HCT116 (cell line): ENCODE measurements at regions of chr10 and their contacts with region 1.

Region 1: GRCh38 chr10:114470956-114471905 is 66.9 kb upstream of the AFAP1L2 start:
- DNase-seq: peak; percentile 62
- ATAC-seq: peak; percentile 96
- H3K4me3 ChIP-seq: no peak overlapping the region
- H3K27ac ChIP-seq: no peak overlapping the region
- H3K4me1 ChIP-seq: peaks cover 9 to 10% of the 10 kb centered on the region in 2 experiments; a peak in 2 of 4 replicates
- H3K27me3 ChIP-seq: no peaks in the 10 kb centered on the region
- CTCF ChIP-seq: peak; percentile 94 to 97 (median 96)
- POLR2A ChIP-seq: no peak
- RAD21 ChIP-seq: peak; percentile 94

Region 2: GRCh38 chr10:114486938-114487814 is 15.9 kb after region 1 on chr10:
- CTCF ChIA-PET with region 1: interaction called, 15 read pairs
- POLR2A ChIA-PET with region 1: no interaction called
- RAD21 ChIA-PET with region 1: no interaction called
- intact Hi-C with region 1: no loop called
- DNase-seq: no peak
- ATAC-seq: peak; percentile 18; the same call in 1 of the 2 replicates
- H3K4me3 ChIP-seq: no peak overlapping the region
- H3K27ac ChIP-seq: peak overlapping the region; percentile 70
- H3K4me1 ChIP-seq: peaks cover 49 to 58% of the 10 kb centered on the region in 2 experiments
- H3K27me3 ChIP-seq: no peaks in the 10 kb centered on the region
- CTCF ChIP-seq: peak; percentile 30 to 74 (median 43); a peak in 4 of 6 replicates
- POLR2A ChIP-seq: no peak
- RAD21 ChIP-seq: peak; percentile 36; the same call in 1 of the 2 replicates

Region 3: GRCh38 chr10:114526504-114527238 is 55.4 kb after region 1 on chr10:
- CTCF ChIA-PET with region 1: interaction called, 3 read pairs
- POLR2A ChIA-PET with region 1: no interaction called
- RAD21 ChIA-PET with region 1: no interaction called
- intact Hi-C with region 1: loop called (anchors 5 kb)
- DNase-seq: peak; percentile 95
- ATAC-seq: peak; percentile 98
- H3K4me3 ChIP-seq: peak overlapping the region; percentile 50 to 68
- H3K27ac ChIP-seq: peak overlapping the region; percentile 63
- H3K4me1 ChIP-seq: peaks cover 28 to 36% of the 10 kb centered on the region in 2 experiments; a peak in 3 of 4 replicates
- H3K27me3 ChIP-seq: no peaks in the 10 kb centered on the region
- CTCF ChIP-seq: no peak
- POLR2A ChIP-seq: peak; percentile 98
- RAD21 ChIP-seq: no peak

Region 4: GRCh38 chr10:114550756-114551635 is 79.8 kb after region 1 on chr10:
- CTCF ChIA-PET with region 1: interaction called, 96 read pairs
- POLR2A ChIA-PET with region 1: interaction called, 3 read pairs
- RAD21 ChIA-PET with region 1: interaction called, 6 to 23 read pairs
- intact Hi-C with region 1: loop called (anchors 1 kb)
- DNase-seq: peak; percentile 32
- ATAC-seq: no peak
- H3K4me3 ChIP-seq: no peak overlapping the region
- H3K27ac ChIP-seq: no peak overlapping the region
- H3K4me1 ChIP-seq: no peaks in the 10 kb centered on the region; a peak in 1 of 4 replicates
- H3K27me3 ChIP-seq: no peaks in the 10 kb centered on the region
- CTCF ChIP-seq: peak; percentile 11 to 95 (median 78); a peak in 4 of 6 replicates
- POLR2A ChIP-seq: no peak
- RAD21 ChIP-seq: peak; percentile 91

Region 5: DNA sequence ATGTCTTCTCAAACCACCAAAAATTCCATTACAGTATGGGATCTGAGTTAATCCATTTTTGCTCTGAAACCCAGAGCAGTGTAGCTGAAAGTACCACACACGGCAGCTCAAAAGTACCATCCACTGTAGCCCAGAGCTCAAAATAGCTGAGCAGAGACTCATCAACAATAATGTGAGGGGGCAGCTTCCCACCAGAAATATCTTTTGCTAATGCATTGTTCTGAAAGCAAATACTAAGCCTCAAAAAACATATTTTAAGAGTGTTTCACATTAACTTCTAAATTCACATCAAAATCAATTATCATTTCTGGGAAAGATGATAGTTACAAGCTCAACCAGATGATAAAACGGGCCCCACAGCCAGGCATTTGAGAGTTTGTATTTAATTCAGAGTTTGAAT is 113.2 kb after region 1 on chr10:
- CTCF ChIA-PET with region 1: no interaction called
- POLR2A ChIA-PET with region 1: no interaction called
- RAD21 ChIA-PET with region 1: no interaction called
- intact Hi-C with region 1: no loop called
- DNase-seq: no peak
- ATAC-seq: no peak
- H3K4me3 ChIP-seq: no peak overlapping the region
- H3K27ac ChIP-seq: no peak overlapping the region
- H3K4me1 ChIP-seq: no peaks in the 10 kb centered on the region
- H3K27me3 ChIP-seq: no peaks in the 10 kb centered on the region
- CTCF ChIP-seq: no peak
- POLR2A ChIP-seq: no peak
- RAD21 ChIP-seq: no peak

Region 6: GRCh38 chr10:114703377-114704107 is 232.3 kb after region 1 on chr10:
- CTCF ChIA-PET with region 1: interaction called, 11 read pairs
- POLR2A ChIA-PET with region 1: no interaction called
- RAD21 ChIA-PET with region 1: no interaction called
- intact Hi-C with region 1: no loop called
- DNase-seq: no peak
- ATAC-seq: peak; percentile 90
- H3K4me3 ChIP-seq: no peak overlapping the region
- H3K27ac ChIP-seq: no peak overlapping the region
- H3K4me1 ChIP-seq: peaks cover 0 to 4% of the 10 kb centered on the region in 2 experiments; a peak in 2 of 4 replicates
- H3K27me3 ChIP-seq: no peaks in the 10 kb centered on the region
- CTCF ChIP-seq: peak; percentile 84 to 95 (median 88)
- POLR2A ChIP-seq: no peak
- RAD21 ChIP-seq: peak; percentile 90

Region 7: DNA sequence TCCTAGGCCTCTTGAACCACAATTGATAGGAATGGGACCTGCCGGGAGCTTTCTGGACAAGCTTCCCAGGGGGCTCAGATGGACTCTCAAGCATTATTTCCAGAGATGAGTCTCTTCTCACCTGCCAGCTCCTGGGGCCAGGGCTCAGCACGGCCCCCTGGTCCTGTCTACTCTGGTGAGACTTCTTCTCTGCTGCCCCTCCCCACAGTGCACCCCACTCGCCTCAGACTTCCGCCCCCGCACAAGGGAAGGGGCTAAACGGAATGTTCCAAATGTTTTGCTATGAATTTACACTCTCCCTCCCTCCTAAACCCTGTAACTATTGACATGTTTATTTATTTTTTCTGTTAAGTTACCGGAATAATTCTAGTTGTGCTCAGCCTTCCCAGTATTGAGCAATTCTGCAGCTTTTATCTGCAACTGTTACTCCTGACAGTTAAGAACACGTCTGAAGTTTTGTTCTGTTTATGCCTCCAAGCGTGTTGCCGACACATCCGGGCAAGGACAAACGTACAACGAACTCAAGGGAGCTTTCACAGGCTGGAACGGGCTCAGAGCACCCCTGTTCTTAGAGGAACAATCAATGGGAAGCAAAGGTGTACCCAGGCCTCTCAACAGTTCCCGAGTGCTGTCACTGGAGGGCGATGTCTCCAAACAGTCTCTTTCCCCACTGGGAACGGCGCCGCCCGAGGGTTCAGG is 405.5 kb after region 1 on chr10:
- CTCF ChIA-PET with region 1: interaction called, 10 read pairs
- POLR2A ChIA-PET with region 1: no interaction called
- RAD21 ChIA-PET with region 1: no interaction called
- intact Hi-C with region 1: no loop called
- DNase-seq: peak; percentile 74
- ATAC-seq: peak; percentile 94
- H3K4me3 ChIP-seq: no peak overlapping the region
- H3K27ac ChIP-seq: no peak overlapping the region
- H3K4me1 ChIP-seq: peaks cover 0 to 13% of the 10 kb centered on the region in 2 experiments; a peak in 1 of 4 replicates
- H3K27me3 ChIP-seq: no peaks in the 10 kb centered on the region
- CTCF ChIP-seq: peak; percentile 95 to 97 (median 96)
- POLR2A ChIP-seq: no peak
- RAD21 ChIP-seq: peak; percentile 96